GM10248 (cell line): ENCODE measurements at regions of chr5 and their contacts with region 1.

Region 1: DNA sequence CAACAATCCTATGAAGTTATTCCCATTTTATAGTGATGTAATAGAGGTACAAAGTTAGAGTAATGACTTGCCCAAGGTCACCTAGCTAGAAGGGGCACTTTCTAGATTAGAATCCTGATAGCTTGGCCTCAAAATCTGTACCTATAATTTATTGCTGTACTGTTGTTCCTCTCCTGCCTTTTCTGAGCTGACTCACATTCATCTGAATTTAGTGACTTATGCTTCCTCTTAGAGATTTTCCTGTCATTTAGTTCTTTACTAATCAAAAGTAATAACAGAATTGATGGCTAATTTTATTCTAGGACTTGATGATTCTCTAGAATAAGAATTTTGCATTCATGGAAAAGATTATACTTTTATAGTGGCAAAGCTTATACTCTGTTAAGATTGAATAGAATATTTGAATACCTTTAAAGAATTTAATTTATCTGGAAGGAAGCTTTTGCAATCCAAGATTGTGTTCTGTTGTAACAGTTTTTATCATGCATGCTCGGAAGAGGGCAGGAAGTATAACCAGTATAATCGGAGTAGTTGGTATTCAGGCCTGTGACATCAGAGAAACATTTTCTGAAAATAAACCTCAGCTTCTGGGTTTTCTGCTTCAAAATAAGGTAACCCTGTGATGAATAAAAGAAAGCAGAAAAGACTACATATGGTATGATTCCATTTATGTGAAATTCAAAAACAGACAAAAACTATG is 21.3 kb downstream of the CYSTM1 start:
- DNase-seq: no peak
- CTCF ChIP-seq: no peak

Region 2: DNA sequence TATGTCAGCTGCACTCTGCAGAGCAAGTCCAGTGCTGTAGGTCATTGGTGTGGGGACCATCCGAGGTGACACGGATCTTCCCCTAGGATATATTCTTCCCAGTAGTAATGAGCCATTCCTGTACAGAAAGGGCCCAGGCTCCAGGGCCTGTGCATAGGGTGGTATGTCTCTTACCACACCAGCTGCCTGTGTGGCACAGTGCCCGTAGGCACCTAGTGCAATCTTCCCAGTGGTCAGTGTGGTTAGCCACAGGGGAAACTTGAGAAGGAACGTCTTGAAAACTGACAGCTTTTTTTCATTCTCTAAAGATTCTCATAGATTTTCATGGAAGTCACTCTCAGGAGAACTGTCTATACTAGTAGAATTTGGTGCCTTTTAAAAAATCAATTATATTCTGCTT is 18.6 kb after region 1 on chr5:
- CTCF ChIA-PET with region 1: interaction called, 11 read pairs
- POLR2A ChIA-PET with region 1: no interaction called
- DNase-seq: no peak
- CTCF ChIP-seq: no peak